ENCODE measurements at regions of chr16 and their contacts with region 1.

Region 1: DNA sequence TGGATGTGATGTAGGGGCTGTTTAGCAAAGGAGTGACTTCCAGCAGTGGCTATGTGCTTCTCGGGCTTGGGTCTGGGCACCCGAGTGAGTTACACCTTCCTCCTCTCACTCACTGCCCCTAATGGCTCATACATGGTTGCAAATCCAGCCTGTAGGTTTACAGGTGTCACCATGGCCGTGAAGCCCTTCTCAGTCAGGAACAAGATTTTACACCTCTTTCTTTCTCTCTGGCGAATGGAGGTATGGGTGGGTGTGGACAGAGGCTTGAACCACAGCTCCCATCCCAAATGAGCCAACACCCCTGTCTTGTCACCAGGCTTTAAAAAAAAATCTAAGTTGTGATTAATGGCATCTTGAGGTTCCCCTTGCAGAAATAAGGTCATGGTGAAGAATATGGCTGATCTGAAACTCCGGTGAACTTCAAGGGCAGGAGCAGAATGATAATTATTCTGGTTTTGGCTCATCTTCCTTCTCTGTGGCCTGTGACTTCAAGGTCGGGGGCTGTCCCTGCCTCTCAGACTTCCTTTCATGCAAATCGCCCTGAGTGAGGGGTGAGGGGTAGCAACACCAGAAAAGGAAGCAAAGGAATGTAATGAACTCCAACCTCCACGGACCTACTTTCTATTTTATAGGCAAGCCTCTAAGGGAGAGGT is 331.2 kb downstream of the MAF start:
- DNase-seq: peak in 4 of 5 donors; percentile 43 to 74 (median 57)
- H3K4me3 ChIP-seq: peak overlapping the region in 1 of 2 donors; percentile 5
- H3K4me3 Mint-ChIP-seq: peak overlapping the region; percentile 67 to 88 (median 79)
- H3K27ac ChIP-seq: no peak overlapping the region
- H3K27ac Mint-ChIP-seq: peak overlapping the region; percentile 81 to 96 (median 91)
- H3K4me1 ChIP-seq: peaks cover 70% of the 10 kb centered on the region
- H3K4me1 Mint-ChIP-seq: peaks cover 63 to 81% (median 68%) of the 10 kb centered on the region in 4 donors
- H3K27me3 ChIP-seq: no peaks in the 10 kb centered on the region
- H3K27me3 Mint-ChIP-seq: peaks cover 0 to 2% of the 10 kb centered on the region in 2 donors

Region 2: GRCh38 chr16:78705694-78706093 is 563.6 kb before region 1 on chr16:
- CTCF ChIA-PET with region 1: no interaction called
- POLR2A ChIA-PET with region 1: no interaction called
- intact Hi-C with region 1: loop called (anchors 5 kb)
- DNase-seq: peak in 4 of 5 donors; percentile 23 to 48 (median 44)
- H3K4me3 ChIP-seq: no peak overlapping the region
- H3K4me3 Mint-ChIP-seq: no peak overlapping the region
- H3K27ac ChIP-seq: no peak overlapping the region
- H3K27ac Mint-ChIP-seq: no peak overlapping the region
- H3K4me1 ChIP-seq: no peaks in the 10 kb centered on the region
- H3K4me1 Mint-ChIP-seq: peaks cover 0 to 3% (median 0%) of the 10 kb centered on the region in 4 donors
- H3K27me3 ChIP-seq: no peaks in the 10 kb centered on the region
- H3K27me3 Mint-ChIP-seq: no peaks in the 10 kb centered on the region

Region 3: GRCh38 chr16:79089735-79090284 is 179.5 kb before region 1 on chr16:
- CTCF ChIA-PET with region 1: interaction called, 3 read pairs
- POLR2A ChIA-PET with region 1: no interaction called
- intact Hi-C with region 1: loop called (anchors 5 kb)
- DNase-seq: peak; percentile 52 to 67 (median 60)
- H3K4me3 ChIP-seq: peak overlapping the region in 1 of 2 donors; percentile 45
- H3K4me3 Mint-ChIP-seq: peak overlapping the region; percentile 77 to 92 (median 84)
- H3K27ac ChIP-seq: no peak overlapping the region
- H3K27ac Mint-ChIP-seq: peak overlapping the region; percentile 65 to 91 (median 80)
- H3K4me1 ChIP-seq: peaks cover 55% of the 10 kb centered on the region
- H3K4me1 Mint-ChIP-seq: peaks cover 28 to 60% (median 42%) of the 10 kb centered on the region in 4 donors
- H3K27me3 ChIP-seq: no peaks in the 10 kb centered on the region
- H3K27me3 Mint-ChIP-seq: no peaks in the 10 kb centered on the region

Region 4: DNA sequence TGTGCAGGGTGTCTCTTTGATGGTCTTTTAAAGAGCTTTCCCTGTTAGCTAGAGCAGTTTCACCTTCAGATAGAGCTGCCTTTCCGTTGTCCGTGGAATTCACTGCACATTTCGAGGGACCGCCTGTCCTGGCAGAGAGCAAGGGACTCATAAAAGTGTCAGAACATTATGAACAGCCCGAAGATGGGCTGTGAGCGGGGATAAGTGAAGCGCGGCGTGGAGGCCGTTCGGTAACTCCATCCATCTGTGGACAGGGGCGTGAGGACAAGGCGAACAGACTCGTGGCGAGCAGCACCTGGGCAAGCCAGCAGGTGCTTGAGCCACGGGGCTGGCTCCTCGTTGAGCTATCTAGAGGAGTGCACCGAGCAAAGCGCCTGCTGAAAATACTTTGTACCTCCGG is 40.0 kb before region 1 on chr16:
- CTCF ChIA-PET with region 1: no interaction called
- POLR2A ChIA-PET with region 1: no interaction called
- intact Hi-C with region 1: no loop called
- DNase-seq: no peak
- H3K4me3 ChIP-seq: no peak overlapping the region
- H3K4me3 Mint-ChIP-seq: no peak overlapping the region
- H3K27ac ChIP-seq: no peak overlapping the region
- H3K27ac Mint-ChIP-seq: no peak overlapping the region
- H3K4me1 ChIP-seq: no peaks in the 10 kb centered on the region
- H3K4me1 Mint-ChIP-seq: no peaks in the 10 kb centered on the region
- H3K27me3 ChIP-seq: no peaks in the 10 kb centered on the region
- H3K27me3 Mint-ChIP-seq: no peaks in the 10 kb centered on the region

Region 5: GRCh38 chr16:79253100-79253631 is 16.2 kb before region 1 on chr16:
- CTCF ChIA-PET with region 1: interaction called, 5 read pairs
- POLR2A ChIA-PET with region 1: interaction called, 3 read pairs
- intact Hi-C with region 1: loop called (anchors 2 kb)
- DNase-seq: no peak
- H3K4me3 ChIP-seq: no peak overlapping the region
- H3K4me3 Mint-ChIP-seq: no peak overlapping the region
- H3K27ac ChIP-seq: no peak overlapping the region
- H3K27ac Mint-ChIP-seq: peak overlapping the region in 1 of 7 donors; percentile 53
- H3K4me1 ChIP-seq: no peaks in the 10 kb centered on the region
- H3K4me1 Mint-ChIP-seq: peaks cover 3 to 9% (median 6%) of the 10 kb centered on the region in 4 donors
- H3K27me3 ChIP-seq: no peaks in the 10 kb centered on the region
- H3K27me3 Mint-ChIP-seq: no peaks in the 10 kb centered on the region

Region 6: GRCh38 chr16:79286646-79287423 is 17.5 kb after region 1 on chr16:
- CTCF ChIA-PET with region 1: interaction called, 109 read pairs
- POLR2A ChIA-PET with region 1: interaction called, 146 read pairs
- intact Hi-C with region 1: loop called (anchors 1 kb)
- DNase-seq: peak in 4 of 5 donors; percentile 36 to 48 (median 40)
- H3K4me3 ChIP-seq: peak overlapping the region; percentile 6 to 59
- H3K4me3 Mint-ChIP-seq: peak overlapping the region; percentile 73 to 93 (median 86)
- H3K27ac ChIP-seq: peak overlapping the region; percentile 23
- H3K27ac Mint-ChIP-seq: peak overlapping the region; percentile 79 to 92 (median 88)
- H3K4me1 ChIP-seq: peaks cover 62% of the 10 kb centered on the region
- H3K4me1 Mint-ChIP-seq: peaks cover 44 to 68% (median 59%) of the 10 kb centered on the region in 4 donors
- H3K27me3 ChIP-seq: no peaks in the 10 kb centered on the region
- H3K27me3 Mint-ChIP-seq: no peaks in the 10 kb centered on the region

Region 7: DNA sequence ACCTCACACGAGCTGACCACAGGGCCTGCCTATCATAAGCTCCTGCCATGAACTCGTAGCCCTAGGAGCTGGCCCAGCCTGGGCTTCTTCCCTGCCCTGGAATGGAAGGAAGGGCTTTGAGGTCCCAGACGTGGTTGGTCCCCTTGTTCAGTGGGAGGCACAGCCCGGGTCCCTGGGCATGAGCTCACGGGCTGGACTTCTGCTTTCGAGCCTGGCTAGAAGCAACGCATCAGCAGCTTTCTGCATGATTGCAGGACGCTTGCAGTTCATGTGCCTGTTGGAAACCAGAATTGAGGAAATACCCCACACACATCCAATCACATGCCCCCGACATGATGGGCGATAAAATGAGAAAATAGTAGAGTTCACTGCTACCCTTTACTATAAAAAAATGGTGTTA is 37.9 kb after region 1 on chr16:
- CTCF ChIA-PET with region 1: no interaction called
- POLR2A ChIA-PET with region 1: no interaction called
- intact Hi-C with region 1: no loop called
- DNase-seq: no peak
- H3K4me3 ChIP-seq: no peak overlapping the region
- H3K4me3 Mint-ChIP-seq: no peak overlapping the region
- H3K27ac ChIP-seq: no peak overlapping the region
- H3K27ac Mint-ChIP-seq: no peak overlapping the region
- H3K4me1 ChIP-seq: peaks cover 16% of the 10 kb centered on the region
- H3K4me1 Mint-ChIP-seq: peaks cover 2 to 14% (median 9%) of the 10 kb centered on the region in 4 donors
- H3K27me3 ChIP-seq: no peaks in the 10 kb centered on the region
- H3K27me3 Mint-ChIP-seq: no peaks in the 10 kb centered on the region

Region 8: DNA sequence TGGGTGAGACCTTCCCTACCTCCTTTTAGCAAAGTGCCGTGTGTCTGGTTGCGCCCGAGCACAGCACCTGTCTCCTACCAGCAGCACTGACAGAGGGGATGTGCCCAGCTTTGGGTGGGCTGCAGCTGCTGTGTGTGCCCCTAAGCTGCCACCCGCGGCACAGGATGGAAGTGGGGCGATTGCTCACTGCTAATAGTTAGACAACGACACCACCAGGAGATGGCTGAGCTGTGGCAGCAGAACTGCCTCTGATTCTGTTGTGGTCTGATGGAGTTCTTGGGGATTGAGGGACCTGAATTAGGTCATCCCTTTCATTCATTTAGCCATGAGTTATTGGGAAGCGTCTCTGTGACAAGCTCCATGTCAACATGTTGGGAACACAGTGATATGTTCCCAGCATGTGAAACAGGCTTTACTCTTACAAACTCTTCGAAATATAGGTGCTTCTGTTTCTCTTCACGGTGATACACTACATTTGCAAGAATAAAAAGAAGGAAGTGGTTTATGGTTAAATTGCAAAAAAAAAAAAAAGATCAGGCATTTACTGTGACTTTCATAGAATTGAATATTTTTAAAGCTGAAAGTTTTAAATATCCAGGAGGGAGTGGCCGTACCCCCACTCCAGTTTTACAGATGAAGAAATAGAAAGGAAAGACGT is 146.8 kb after region 1 on chr16:
- CTCF ChIA-PET with region 1: interaction called, 17 read pairs
- POLR2A ChIA-PET with region 1: interaction called, 6 read pairs
- intact Hi-C with region 1: no loop called
- DNase-seq: peak in 4 of 5 donors; percentile 29 to 53 (median 46)
- H3K4me3 ChIP-seq: peak overlapping the region in 1 of 2 donors; percentile 16
- H3K4me3 Mint-ChIP-seq: peak overlapping the region; percentile 43 to 80 (median 72)
- H3K27ac ChIP-seq: no peak overlapping the region
- H3K27ac Mint-ChIP-seq: peak overlapping the region; percentile 9 to 90 (median 81)
- H3K4me1 ChIP-seq: peaks cover 39% of the 10 kb centered on the region
- H3K4me1 Mint-ChIP-seq: peaks cover 33 to 57% (median 47%) of the 10 kb centered on the region in 4 donors
- H3K27me3 ChIP-seq: no peaks in the 10 kb centered on the region
- H3K27me3 Mint-ChIP-seq: no peaks in the 10 kb centered on the region